HEK293T (cell line): ENCODE measurements at regions of chr6 and their contacts with region 1.

Region 1: GRCh38 chr6:5003604-5004372 is at the start of gene RPP40:
- DNase-seq: peak; percentile 94

Region 2: GRCh38 chr6:5025911-5026819 is 22.4 kb after region 1 on chr6:
- CTCF ChIA-PET with region 1: interaction called, 4 read pairs
- POLR2A ChIA-PET with region 1: interaction called, 10 read pairs
- DNase-seq: peak; percentile 63